Activated CD4-positive, alpha-beta T cell treated with anti-CD3 and anti-CD28 coated beads, Interleukin-2, amount 10 ng/mL, durations not matched to agents 24 days and 14 days (primary cell): ENCODE measurements at regions of chr19 and their contacts with region 1.

Region 1: DNA sequence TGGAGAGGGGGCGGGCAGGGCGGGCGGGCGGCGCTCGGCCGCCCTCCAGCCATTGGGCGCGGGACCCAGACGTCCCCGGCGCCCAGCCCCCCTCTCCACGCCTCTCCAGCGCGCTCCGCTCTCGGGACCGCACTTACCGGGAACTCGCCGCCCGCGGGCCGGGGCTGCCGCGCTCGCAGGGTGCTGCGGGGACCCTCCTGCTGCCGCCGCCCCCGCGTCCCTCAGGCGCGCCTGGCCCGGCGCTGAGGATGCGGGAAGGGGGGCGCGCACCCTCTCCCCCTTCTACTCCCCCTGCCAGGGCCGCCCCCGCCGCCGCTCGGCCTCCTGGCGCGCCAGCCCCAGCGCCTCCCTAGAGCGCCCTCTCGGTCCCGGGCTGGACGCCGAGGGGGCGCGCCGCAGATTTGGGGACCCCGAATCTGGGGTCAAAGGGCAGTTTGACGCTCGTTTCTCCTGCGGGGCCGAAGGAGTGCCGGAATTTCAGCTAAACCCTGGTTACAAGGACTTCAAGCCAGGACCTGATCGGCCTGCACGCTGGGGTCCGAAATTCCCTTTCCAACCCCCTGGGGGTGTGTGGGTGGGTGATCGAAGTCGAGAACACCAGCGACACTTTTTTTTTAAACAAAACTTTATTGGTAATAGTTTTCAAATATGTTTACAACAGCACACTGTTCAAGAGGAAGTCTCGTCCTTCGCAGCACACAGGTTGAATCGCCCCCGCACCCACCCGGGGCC is 696 bp upstream of the SAMD1 start:
- DNase-seq: peak; percentile 94
- H3K4me3 Mint-ChIP-seq: peak overlapping the region; percentile 92
- H3K27ac Mint-ChIP-seq: peak overlapping the region; percentile 98
- H3K4me1 Mint-ChIP-seq: peaks cover 17% of the 10 kb centered on the region
- H3K27me3 Mint-ChIP-seq: no peaks in the 10 kb centered on the region

Region 2: GRCh38 chr19:14073261-14073924 is 17.9 kb before region 1 on chr19:
- intact Hi-C with region 1: loop called (anchors 1 kb)
- DNase-seq: peak; percentile 94
- H3K4me3 Mint-ChIP-seq: peak overlapping the region; percentile 99
- H3K27ac Mint-ChIP-seq: peak overlapping the region; percentile 99
- H3K4me1 Mint-ChIP-seq: peaks cover 16% of the 10 kb centered on the region
- H3K27me3 Mint-ChIP-seq: peaks cover 6% of the 10 kb centered on the region